ENCODE measurements at regions of chrX and their contacts with region 1.

Region 1: GRCh38 chrX:42195511-42195910 is 272.2 kb upstream of the CASK start:
- DNase-seq: no peak
- H3K4me3 ChIP-seq: no peak overlapping the region
- H3K27ac ChIP-seq: no peak overlapping the region
- H3K4me1 ChIP-seq: no peaks in the 10 kb centered on the region
- H3K27me3 ChIP-seq: no peaks in the 10 kb centered on the region
- CTCF ChIP-seq: no peak
- EP300 ChIP-seq: no peak
- POLR2A ChIP-seq: no peak

Region 2: DNA sequence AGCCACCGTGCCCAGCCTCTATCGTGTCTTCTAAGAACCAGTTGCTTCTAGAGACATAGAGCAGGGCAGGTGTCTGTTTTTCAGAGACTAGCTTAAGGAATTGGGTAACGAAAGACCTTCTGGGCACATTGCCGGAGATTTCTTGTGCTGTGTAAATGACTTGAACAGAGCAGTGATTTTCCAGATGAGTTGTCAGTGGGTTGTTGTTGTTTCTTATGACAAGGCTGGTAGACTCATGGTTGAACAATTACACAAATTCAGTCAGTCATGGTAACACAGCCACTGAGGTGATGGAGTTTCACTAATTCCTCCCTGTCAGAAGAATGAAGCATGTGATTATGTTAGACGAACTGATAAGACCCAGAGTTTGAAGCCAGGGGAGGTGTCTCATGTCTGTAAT is 882.1 kb before region 1 on chrX:
- in situ Hi-C with region 1: no loop called
- intact Hi-C with region 1: no loop called
- DNase-seq: no peak
- H3K4me3 ChIP-seq: no peak overlapping the region
- H3K27ac ChIP-seq: no peak overlapping the region
- H3K4me1 ChIP-seq: no peaks in the 10 kb centered on the region
- H3K27me3 ChIP-seq: no peaks in the 10 kb centered on the region
- CTCF ChIP-seq: no peak
- EP300 ChIP-seq: no peak
- POLR2A ChIP-seq: no peak

Region 3: GRCh38 chrX:42128020-42128419 is 67.5 kb before region 1 on chrX:
- in situ Hi-C with region 1: no loop called
- intact Hi-C with region 1: no loop called
- DNase-seq: no peak
- H3K4me3 ChIP-seq: no peak overlapping the region
- H3K27ac ChIP-seq: no peak overlapping the region
- H3K4me1 ChIP-seq: no peaks in the 10 kb centered on the region
- H3K27me3 ChIP-seq: no peaks in the 10 kb centered on the region
- CTCF ChIP-seq: no peak
- EP300 ChIP-seq: no peak
- POLR2A ChIP-seq: no peak

Region 4: DNA sequence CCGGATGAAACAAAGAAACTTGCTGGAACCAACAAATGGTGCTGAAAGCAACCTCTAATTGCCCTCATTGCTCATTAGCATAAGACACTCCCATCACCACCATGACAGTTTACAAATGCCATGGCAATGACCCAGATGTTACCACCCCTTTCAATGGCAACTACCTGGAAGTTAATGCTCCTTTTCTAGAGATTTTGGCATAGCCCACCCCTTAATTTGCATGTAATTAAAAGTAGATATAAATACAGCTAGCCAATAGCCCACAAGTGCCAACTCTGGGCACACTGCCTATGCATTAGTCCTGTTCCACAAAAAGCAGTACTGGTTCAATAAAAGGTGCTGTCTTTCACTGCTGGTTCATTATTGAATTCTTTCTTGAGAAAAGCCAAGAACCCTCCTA is 992.8 kb after region 1 on chrX:
- in situ Hi-C with region 1: no loop called
- intact Hi-C with region 1: loop called (anchors 5 kb)
- DNase-seq: no peak
- H3K4me3 ChIP-seq: no peak overlapping the region
- H3K27ac ChIP-seq: no peak overlapping the region
- H3K4me1 ChIP-seq: no peaks in the 10 kb centered on the region
- H3K27me3 ChIP-seq: no peaks in the 10 kb centered on the region
- CTCF ChIP-seq: no peak
- EP300 ChIP-seq: no peak
- POLR2A ChIP-seq: no peak